Lower leg skin (tissue), 4 donors: ENCODE measurements at regions of chr2 and their contacts with region 1.

Region 1: GRCh38 chr2:18085593-18085992 is 207.1 kb downstream of the KCNS3 start:
- DNase-seq: no peak
- H3K4me3 ChIP-seq: no peak overlapping the region
- CTCF ChIP-seq: no peak
- POLR2A ChIP-seq: no peak

Region 2: GRCh38 chr2:17583166-17583565 is 502.4 kb before region 1 on chr2:
- intact Hi-C with region 1: no loop called
- DNase-seq: no peak
- H3K4me3 ChIP-seq: no peak overlapping the region
- CTCF ChIP-seq: no peak
- POLR2A ChIP-seq: no peak

Region 3: DNA sequence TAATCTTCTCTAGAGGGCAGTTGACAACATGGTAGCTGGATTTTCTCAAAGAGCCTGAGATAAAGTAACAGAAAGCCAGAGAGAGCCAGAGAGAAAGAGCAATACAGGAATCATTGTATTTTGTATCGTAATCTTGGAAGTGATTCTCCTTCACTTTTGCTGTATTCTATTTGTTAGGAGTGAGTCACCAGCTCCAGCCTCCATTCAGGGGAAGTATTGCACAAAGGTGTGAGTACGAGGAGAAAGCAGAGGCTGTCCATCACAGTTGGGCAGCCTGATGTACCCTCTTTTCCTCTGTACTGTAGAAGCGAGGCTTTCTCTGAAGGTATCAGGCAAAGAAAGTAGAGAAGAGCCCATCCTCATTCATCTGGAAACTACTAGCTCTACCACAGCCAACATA is 30.3 kb before region 1 on chr2:
- intact Hi-C with region 1: loop called (anchors 1 kb)
- DNase-seq: no peak
- H3K4me3 ChIP-seq: no peak overlapping the region
- CTCF ChIP-seq: no peak
- POLR2A ChIP-seq: no peak

Region 4: DNA sequence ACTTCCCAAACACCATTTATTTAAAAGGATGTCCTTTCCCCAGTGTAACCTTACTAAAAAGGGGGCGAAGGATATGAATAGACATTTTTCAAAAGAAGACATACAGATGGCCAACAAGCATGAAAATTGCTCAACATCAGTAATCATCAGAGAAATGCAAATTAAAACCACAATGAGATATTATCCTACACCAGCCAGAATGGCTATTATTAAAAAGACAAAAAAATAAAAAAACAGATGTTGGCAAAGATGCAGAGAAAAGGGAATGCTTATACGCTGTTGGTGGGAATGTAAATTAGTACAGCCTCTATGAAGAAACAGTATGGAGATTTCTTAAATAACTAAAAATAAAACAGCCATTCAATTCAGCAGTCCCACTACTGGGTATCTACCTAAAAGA is 646.1 kb after region 1 on chr2:
- intact Hi-C with region 1: no loop called
- DNase-seq: no peak
- H3K4me3 ChIP-seq: no peak overlapping the region
- CTCF ChIP-seq: no peak
- POLR2A ChIP-seq: no peak